Heart left ventricle (tissue), 16 donors: ENCODE measurements at regions of chr6 and their contacts with region 1.

Region 1: DNA sequence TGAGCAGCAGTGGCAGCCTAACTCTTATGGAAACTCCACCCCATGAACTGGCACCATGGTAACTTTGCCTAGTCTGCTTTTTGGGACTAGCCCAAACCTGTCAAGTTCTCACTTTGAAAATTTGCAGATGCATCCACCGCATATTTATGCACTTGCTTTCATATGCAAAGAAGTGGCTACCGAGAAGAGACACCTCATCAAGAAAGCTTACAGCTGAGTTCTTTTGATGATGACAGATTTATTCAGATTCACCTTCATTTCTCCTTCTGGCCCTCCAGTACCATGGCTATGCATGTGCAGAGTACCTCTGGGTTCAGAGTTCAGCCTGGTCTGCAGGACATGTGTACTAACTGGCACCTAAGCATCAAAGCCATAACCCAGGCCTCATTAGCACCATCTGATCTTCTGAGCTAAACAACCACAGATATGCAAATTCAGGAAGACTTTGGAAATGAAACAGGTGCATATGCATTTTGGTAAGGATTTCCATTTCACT is 154.3 kb upstream of the TENT5A start:
- DNase-seq: peak in 1 of 5 donors; percentile 33
- ATAC-seq: peak; percentile 56 to 76 (median 70)
- H3K4me3 ChIP-seq: no peak overlapping the region
- H3K27ac ChIP-seq: peak overlapping the region in 8 of 12 donors; percentile 13 to 67 (median 30)
- H3K4me1 ChIP-seq: peaks cover 0 to 38% (median 6%) of the 10 kb centered on the region in 12 donors
- H3K27me3 ChIP-seq: no peaks in the 10 kb centered on the region
- CTCF ChIP-seq: no peak
- POLR2A ChIP-seq: no peak

Region 2: DNA sequence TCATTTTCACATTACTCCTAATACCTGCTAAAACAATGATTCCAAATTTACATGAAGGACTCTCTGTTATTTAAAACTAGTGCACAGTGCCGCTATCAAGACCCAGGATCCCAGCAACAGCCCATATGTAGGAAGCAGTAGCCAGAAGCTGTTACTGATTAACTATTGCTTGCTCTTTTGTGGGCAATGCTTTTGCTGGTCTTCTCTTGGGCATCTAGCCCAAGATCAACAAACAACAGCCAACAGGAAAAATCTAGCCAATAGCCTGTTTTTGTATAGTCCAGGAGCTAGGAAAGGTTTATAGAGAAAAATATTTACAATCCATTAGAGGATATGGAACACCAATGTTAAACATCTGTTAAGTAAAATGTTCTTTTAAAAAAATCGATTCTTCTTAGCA is 132.2 kb before region 1 on chr6:
- intact Hi-C with region 1: no loop called
- DNase-seq: no peak
- ATAC-seq: no peak
- H3K4me3 ChIP-seq: no peak overlapping the region
- H3K27ac ChIP-seq: no peak overlapping the region
- H3K4me1 ChIP-seq: no peaks in the 10 kb centered on the region
- H3K27me3 ChIP-seq: no peaks in the 10 kb centered on the region
- CTCF ChIP-seq: no peak
- POLR2A ChIP-seq: no peak

Region 3: GRCh38 chr6:81834141-81834681 is 72.5 kb before region 1 on chr6:
- intact Hi-C with region 1: loop called in 1 of 10 experiments (anchors 10 kb)
- DNase-seq: peak; percentile 55 to 89 (median 66)
- ATAC-seq: peak; percentile 98 to 99 (median 99)
- H3K4me3 ChIP-seq: no peak overlapping the region
- H3K27ac ChIP-seq: peak overlapping the region; percentile 56 to 82 (median 74)
- H3K4me1 ChIP-seq: peaks cover 0 to 21% (median 16%) of the 10 kb centered on the region in 12 donors
- H3K27me3 ChIP-seq: no peaks in the 10 kb centered on the region
- CTCF ChIP-seq: peak in 4 of 12 donors; percentile 5 to 26 (median 10)
- POLR2A ChIP-seq: no peak

Region 4: DNA sequence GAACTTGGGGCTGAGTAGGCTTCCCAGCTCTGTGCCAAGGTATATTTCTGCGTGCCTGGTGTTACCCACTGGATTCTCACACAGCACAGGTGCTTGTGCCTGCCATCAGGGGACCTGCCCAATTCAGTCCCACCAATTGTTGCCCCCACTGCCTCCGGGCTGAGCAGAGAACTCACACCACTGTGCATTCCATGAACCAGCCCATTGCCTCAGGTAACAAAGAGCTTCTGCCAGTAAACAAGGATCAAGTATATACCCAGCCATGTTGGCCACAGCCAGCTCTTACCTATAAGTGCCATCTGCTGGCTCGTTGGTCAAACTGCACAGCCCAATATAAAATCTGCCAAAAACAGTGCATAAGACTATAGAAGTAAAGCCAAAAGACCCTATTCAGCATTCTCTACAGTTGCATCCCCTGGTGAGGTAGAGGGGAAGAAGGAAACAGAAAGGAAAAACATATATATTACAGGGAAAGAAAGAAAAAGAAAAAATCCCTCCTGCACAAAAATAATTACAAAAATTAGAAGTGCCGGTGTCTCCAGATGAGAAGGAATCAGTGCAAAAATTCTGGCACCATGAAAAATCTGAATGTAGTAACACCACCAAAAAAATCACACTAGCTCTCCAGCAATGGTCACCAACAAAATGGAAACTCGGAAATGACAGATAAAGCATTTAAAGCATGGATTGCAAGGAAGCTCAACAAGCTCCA is 99.4 kb after region 1 on chr6:
- intact Hi-C with region 1: loop called in 1 of 10 experiments (anchors 10 kb)
- DNase-seq: peak in 2 of 5 donors; percentile 26 to 27
- ATAC-seq: peak in 3 of 4 donors; percentile 55 to 68 (median 61)
- H3K4me3 ChIP-seq: no peak overlapping the region
- H3K27ac ChIP-seq: no peak overlapping the region
- H3K4me1 ChIP-seq: no peaks in the 10 kb centered on the region
- H3K27me3 ChIP-seq: no peaks in the 10 kb centered on the region
- CTCF ChIP-seq: peak in 11 of 12 donors; percentile 30 to 57 (median 45)
- POLR2A ChIP-seq: no peak

Region 5: DNA sequence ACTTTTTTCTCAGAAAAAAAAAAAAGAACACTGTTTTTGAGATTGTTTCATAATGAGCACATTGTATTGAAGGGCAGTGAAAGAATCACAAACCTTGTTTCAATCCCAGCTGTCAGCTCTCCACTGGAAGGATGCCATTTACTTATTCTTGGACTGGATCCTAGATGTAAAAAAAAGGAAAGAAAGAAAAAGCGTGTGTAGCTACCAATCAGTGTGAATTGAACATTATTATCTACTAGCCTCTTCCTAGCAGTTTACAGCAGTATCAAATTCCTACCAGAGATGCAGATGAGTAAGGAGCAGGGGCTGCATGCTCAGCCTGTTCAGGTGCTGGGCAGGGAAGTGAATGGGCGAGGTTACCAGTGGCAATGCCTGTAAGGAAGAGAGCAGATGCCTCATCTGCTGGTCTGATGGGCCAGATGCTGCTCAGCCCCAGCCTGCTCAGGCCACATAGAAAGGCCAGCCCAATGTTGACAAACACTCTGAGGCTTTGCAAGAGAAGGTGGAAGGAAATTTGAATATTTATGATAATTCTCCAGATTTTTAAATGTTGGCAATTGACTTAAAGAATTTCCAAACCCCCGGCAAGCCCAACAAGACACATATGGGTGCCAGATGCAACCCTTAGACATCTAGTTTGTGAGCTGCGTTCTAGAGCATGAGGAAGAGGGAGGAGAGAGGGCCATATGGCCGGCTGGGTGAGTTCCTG is 151.2 kb after region 1 on chr6:
- intact Hi-C with region 1: loop called in 1 of 10 experiments (anchors 10 kb)
- DNase-seq: peak in 1 of 5 donors; percentile 22
- ATAC-seq: peak in 3 of 4 donors; percentile 45 to 65 (median 50)
- H3K4me3 ChIP-seq: no peak overlapping the region
- H3K27ac ChIP-seq: peak overlapping the region in 4 of 12 donors; percentile 6 to 48 (median 22)
- H3K4me1 ChIP-seq: peaks cover 0 to 15% (median 5%) of the 10 kb centered on the region in 12 donors
- H3K27me3 ChIP-seq: no peaks in the 10 kb centered on the region
- CTCF ChIP-seq: no peak
- POLR2A ChIP-seq: no peak

Region 6: DNA sequence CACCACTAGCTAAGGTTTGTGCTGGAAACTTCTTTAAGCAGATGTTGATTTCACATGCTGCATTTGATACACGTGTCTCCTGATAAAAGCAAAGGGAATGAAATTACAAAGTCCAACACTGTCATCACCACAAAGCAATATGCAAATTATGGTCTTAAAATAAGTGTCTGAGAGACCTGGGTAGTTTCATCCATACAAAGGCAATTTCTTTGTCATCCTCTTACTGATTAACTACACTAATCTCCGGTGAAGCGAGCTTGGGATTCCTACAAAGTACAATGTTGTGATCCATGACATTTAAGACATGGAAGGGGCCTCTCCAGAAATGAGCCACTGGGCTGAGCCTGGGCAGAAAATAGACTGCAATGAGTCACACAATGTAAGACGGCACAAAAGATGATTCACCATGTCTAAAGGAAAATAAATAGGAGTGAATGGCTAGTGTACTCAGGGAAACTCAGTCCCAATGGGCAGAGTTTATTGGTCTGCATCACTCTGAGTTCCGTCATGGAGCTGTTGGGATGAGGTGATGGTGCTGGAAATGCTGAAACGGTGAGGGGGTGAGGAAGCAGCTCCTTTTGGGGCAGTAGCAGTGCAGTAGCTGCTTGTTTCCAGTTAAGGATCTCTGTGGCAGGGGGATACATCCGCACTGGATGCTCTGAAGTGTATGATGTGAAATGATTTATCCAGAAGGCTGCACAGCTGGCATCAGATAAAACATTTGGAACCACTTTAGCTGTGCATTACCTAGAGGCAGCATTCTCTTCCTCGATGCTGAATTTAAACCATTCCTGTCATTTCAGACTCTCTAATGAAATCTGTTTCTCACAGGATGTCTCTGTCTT is 237.5 kb after region 1 on chr6:
- intact Hi-C with region 1: loop called in 2 of 10 experiments (anchors 10 kb)
- DNase-seq: peak in 4 of 5 donors; percentile 38 to 69 (median 46)
- ATAC-seq: peak; percentile 80 to 96 (median 88)
- H3K4me3 ChIP-seq: peak overlapping the region in 1 of 12 donors; percentile 5
- H3K27ac ChIP-seq: peak overlapping the region; percentile 60 to 92 (median 77)
- H3K4me1 ChIP-seq: peaks cover 0 to 33% (median 14%) of the 10 kb centered on the region in 12 donors
- H3K27me3 ChIP-seq: no peaks in the 10 kb centered on the region
- CTCF ChIP-seq: no peak
- POLR2A ChIP-seq: no peak